ENCODE measurements at regions of chr2 and their contacts with region 1.

Region 1: GRCh38 chr2:32063310-32064161 is at the start of gene SPAST:
- DNase-seq: peak; percentile 92 to 97 (median 95)
- ATAC-seq: peak; percentile 87 to 90
- H3K4me3 Mint-ChIP-seq: peak within 1 kb of the TSS; percentile 93 to 100 (median 98)
- H3K27ac Mint-ChIP-seq: peak within 1 kb of the TSS; percentile 88 to 97 (median 96)
- H3K4me1 Mint-ChIP-seq: peaks cover 15 to 47% (median 33%) of the 10 kb centered on the region in 4 donors
- H3K27me3 Mint-ChIP-seq: no peaks in the 10 kb centered on the region
- polyA plus RNA-seq, gene SPAST: 6.8 to 9.7 (median 9.0) TPM

Region 2: GRCh38 chr2:32010670-32011484 is 52.7 kb before region 1 on chr2 and contains the start of gene MEMO1:
- POLR2A ChIA-PET with region 1: interaction called, 19 read pairs
- DNase-seq: peak; percentile 79 to 96 (median 92)
- ATAC-seq: peak; percentile 75 to 81
- H3K4me3 Mint-ChIP-seq: peak within 1 kb of the TSS; percentile 86 to 94 (median 90)
- H3K27ac Mint-ChIP-seq: peak within 1 kb of the TSS; percentile 89 to 98 (median 95)
- H3K4me1 Mint-ChIP-seq: peaks cover 23 to 49% (median 46%) of the 10 kb centered on the region in 4 donors
- H3K27me3 Mint-ChIP-seq: no peaks in the 10 kb centered on the region
- polyA plus RNA-seq, gene MEMO1: 23.7 to 26.2 (median 25.2) TPM

Region 3: GRCh38 chr2:32039447-32040219 is 23.9 kb before region 1 on chr2 and contains the start of gene DPY30:
- POLR2A ChIA-PET with region 1: interaction called, 73 read pairs
- DNase-seq: peak; percentile 82 to 94 (median 89)
- ATAC-seq: peak; percentile 91 to 96
- H3K4me3 Mint-ChIP-seq: peak within 1 kb of the TSS; percentile 84 to 97 (median 92)
- H3K27ac Mint-ChIP-seq: peak within 1 kb of the TSS; percentile 91 to 98 (median 95)
- H3K4me1 Mint-ChIP-seq: peaks cover 3 to 25% (median 18%) of the 10 kb centered on the region in 4 donors
- H3K27me3 Mint-ChIP-seq: peaks cover 0 to 3% (median 0%) of the 10 kb centered on the region in 5 donors
- polyA plus RNA-seq, gene DPY30: 151 to 179 (median 159) TPM

Region 4: DNA sequence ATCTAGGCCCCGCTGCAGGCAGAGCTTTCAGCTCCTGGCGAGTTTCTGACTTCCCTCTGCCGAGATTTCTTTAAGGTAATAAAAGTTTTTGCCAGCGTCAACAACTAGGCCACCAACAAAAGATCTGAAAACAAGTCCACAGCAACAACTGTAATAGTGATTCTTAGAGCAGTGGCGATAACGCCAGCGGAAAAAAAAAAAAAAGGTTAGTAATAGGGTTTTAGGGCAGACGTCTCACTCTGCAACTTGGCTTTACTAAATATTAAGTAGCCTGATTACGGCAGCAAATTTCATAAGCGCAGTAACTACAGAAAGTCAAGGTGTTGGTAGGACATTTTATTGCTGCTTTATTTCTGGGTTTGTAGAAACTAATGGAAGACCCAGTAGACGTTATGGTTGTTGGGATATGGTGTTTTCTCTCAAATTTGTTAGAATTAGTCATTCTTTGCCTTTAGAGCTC is 102.6 kb after region 1 on chr2:
- POLR2A ChIA-PET with region 1: interaction called, 12 read pairs
- DNase-seq: peak in 1 of 10 donors; percentile 1
- ATAC-seq: no peak
- H3K4me3 Mint-ChIP-seq: peak overlapping the region; percentile 92 to 99 (median 98)
- H3K27ac Mint-ChIP-seq: peak overlapping the region; percentile 91 to 99 (median 97)
- H3K4me1 Mint-ChIP-seq: peaks cover 16 to 40% (median 36%) of the 10 kb centered on the region in 4 donors
- H3K27me3 Mint-ChIP-seq: no peaks in the 10 kb centered on the region

Region 5: DNA sequence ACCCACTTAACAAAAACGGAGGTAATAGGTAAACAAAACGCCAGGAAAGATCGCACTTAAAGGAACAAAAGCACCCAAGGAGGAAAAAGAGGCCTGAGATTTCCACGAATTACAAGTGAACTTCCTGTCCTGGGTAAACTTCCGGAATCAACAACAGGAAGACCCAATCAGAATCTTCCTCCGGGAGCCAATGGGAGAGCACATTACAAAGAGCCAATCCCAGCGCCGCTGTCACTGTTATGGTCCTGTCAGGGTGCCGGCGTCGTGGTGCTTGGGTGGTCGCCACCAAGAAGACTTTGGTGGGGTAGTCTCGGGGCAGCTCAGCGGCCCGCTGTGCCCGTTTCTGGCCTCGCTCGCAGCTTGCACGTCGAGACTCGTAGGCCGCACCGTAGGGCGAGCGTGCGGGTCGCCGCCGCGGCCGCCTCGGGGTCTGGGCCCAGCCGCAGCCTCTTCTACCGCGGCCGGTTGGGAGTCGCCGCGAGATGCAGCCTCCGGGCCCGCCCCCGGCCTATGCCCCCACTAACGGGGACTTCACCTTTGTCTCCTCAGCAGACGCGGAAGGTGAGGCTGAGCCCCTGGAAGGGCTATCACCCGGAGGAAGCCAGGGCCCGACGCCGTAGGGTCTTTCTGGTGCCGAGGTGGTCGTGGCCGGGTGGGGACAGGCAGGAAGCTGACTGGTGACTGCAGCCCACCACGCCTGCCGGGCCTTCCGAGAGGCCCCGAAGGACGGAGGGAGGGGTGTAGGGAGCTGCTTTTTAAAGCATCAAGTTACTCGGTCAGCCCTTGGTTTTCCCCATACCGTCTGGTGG is 214.3 kb after region 1 on chr2 and contains the start of gene YIPF4:
- POLR2A ChIA-PET with region 1: no interaction called
- DNase-seq: peak; percentile 76 to 99 (median 92)
- ATAC-seq: peak; percentile 95 to 96
- H3K4me3 Mint-ChIP-seq: peak within 1 kb of the TSS; percentile 87 to 98 (median 92)
- H3K27ac Mint-ChIP-seq: peak within 1 kb of the TSS; percentile 97 to 99 (median 98)
- H3K4me1 Mint-ChIP-seq: peaks cover 13 to 44% (median 30%) of the 10 kb centered on the region in 4 donors
- H3K27me3 Mint-ChIP-seq: peaks cover 0 to 7% (median 2%) of the 10 kb centered on the region in 5 donors
- polyA plus RNA-seq, gene YIPF4: 14.7 to 16.1 (median 14.8) TPM